ENCODE measurements at regions of chr11 and their contacts with region 1.

Region 1: GRCh38 chr11:102007567-102008437 is 39.4 kb upstream of the CFAP300 start:
- DNase-seq: no peak

Region 2: GRCh38 chr11:101862409-101863233 is 145.2 kb before region 1 on chr11:
- intact Hi-C with region 1: loop called (anchors 2 kb)
- DNase-seq: no peak

Region 3: GRCh38 chr11:101944923-101945322 is 62.9 kb before region 1 on chr11:
- intact Hi-C with region 1: no loop called
- DNase-seq: no peak

Measured in cardiac septum (tissue), 1 donor.